ENCODE measurements at regions of chr11 and their contacts with region 1.

Region 1: GRCh38 chr11:77547863-77548551 is 41.7 kb upstream of the AQP11 start:
- DNase-seq: peak; percentile 81
- ATAC-seq: peak; percentile 67
- H3K4me3 ChIP-seq: no peak overlapping the region
- H3K27ac ChIP-seq: no peak overlapping the region
- H3K4me1 ChIP-seq: no peaks in the 10 kb centered on the region
- H3K27me3 ChIP-seq: no peaks in the 10 kb centered on the region
- CTCF ChIP-seq: peak; percentile 90

Region 2: DNA sequence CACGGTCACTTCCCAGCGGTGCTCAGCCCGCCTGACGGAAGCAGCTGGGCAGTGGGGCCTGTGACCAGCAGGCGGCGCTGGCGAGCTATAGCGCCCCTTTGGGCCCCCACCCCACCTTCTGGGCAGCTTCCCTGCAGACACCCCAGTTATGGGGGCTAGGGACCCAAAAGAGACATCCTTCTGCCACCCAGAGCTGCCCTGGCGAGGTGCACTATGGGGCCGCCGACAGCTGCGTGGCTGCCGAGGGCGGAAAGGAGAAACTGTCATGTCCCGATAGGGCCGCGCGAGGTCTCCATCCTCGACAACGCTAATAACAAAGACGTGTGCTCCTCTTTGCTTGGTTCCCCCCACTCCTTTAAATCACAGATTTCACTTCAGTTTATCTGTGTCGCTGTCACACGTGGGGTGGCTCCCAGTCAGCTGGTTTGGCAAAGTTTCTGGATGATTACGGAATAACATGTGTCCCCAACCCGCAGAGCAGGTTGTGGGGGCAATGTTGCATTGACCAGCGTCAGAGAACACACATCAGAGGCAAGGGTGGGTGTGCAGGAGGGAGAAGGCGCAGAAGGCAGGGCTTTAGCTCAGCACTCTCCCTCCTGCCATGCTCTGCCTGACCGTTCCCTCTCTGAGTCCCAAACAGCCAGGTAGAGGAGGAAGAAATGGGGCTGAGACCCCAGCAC is 420.6 kb before region 1 on chr11:
- CTCF ChIA-PET with region 1: no interaction called
- POLR2A ChIA-PET with region 1: no interaction called
- intact Hi-C with region 1: loop called (anchors 1 kb)
- DNase-seq: peak; percentile 50
- ATAC-seq: peak; percentile 77
- H3K4me3 ChIP-seq: peak overlapping the region; percentile 68
- H3K27ac ChIP-seq: no peak overlapping the region
- H3K4me1 ChIP-seq: peaks cover 6% of the 10 kb centered on the region; the same call in 1 of the 2 replicates
- H3K27me3 ChIP-seq: no peaks in the 10 kb centered on the region
- CTCF ChIP-seq: peak; percentile 99

Region 3: GRCh38 chr11:77198440-77198849 is 349.6 kb before region 1 on chr11:
- CTCF ChIA-PET with region 1: interaction called, 17 read pairs
- POLR2A ChIA-PET with region 1: no interaction called
- intact Hi-C with region 1: loop called (anchors 1 kb)
- DNase-seq: peak; percentile 43
- ATAC-seq: peak; percentile 30; the same call in 1 of the 2 replicates
- H3K4me3 ChIP-seq: no peak overlapping the region
- H3K27ac ChIP-seq: no peak overlapping the region
- H3K4me1 ChIP-seq: no peaks in the 10 kb centered on the region
- H3K27me3 ChIP-seq: no peaks in the 10 kb centered on the region
- CTCF ChIP-seq: peak; percentile 64

Region 4: DNA sequence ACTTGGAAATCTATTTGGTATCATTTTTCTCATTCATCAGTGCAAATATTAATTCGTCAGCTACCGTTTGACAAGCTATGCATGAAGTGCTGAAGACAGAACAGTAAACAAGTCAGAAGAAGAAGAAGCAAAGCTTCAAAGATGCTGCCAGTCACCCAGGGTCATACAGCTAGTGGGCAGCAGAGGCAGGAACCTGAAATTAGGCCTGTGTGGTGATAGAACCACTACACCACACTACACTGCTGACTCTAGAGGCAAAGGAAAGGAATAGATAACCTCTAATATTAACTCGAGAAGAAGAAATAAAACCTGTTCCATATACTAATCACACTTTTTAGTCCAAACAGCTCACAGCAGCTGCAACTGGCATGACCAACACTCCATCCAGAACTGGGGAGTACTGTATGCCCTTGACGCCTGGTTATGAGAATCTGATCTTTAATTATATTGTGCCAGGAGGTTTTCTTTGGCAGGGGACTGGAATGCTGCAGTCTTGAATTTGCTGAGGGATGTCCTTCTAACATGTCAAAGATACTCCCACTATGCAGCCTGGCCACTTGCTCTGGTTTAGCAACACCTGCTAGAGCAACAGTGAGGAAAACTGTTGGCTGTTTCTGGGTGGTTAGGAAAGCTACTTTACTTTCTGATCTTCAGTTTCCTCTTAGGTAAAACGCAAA is 147.1 kb before region 1 on chr11:
- CTCF ChIA-PET with region 1: no interaction called
- POLR2A ChIA-PET with region 1: no interaction called
- intact Hi-C with region 1: no loop called
- DNase-seq: no peak
- ATAC-seq: no peak; the same call in 1 of the 2 replicates
- H3K4me3 ChIP-seq: no peak overlapping the region
- H3K27ac ChIP-seq: no peak overlapping the region
- H3K4me1 ChIP-seq: peaks cover 17% of the 10 kb centered on the region
- H3K27me3 ChIP-seq: no peaks in the 10 kb centered on the region
- CTCF ChIP-seq: no peak

Region 5: GRCh38 chr11:77411717-77412441 is 136.1 kb before region 1 on chr11:
- CTCF ChIA-PET with region 1: interaction called, 7 read pairs
- POLR2A ChIA-PET with region 1: no interaction called
- intact Hi-C with region 1: loop called (anchors 5 kb)
- DNase-seq: peak; percentile 87
- ATAC-seq: peak; percentile 68
- H3K4me3 ChIP-seq: peak overlapping the region; percentile 63
- H3K27ac ChIP-seq: no peak overlapping the region
- H3K4me1 ChIP-seq: peaks cover 33% of the 10 kb centered on the region
- H3K27me3 ChIP-seq: no peaks in the 10 kb centered on the region
- CTCF ChIP-seq: no peak

Region 6: GRCh38 chr11:77473801-77474683 is 74.0 kb before region 1 on chr11 and contains the start of gene PAK1:
- CTCF ChIA-PET with region 1: interaction called, 3 read pairs
- POLR2A ChIA-PET with region 1: no interaction called
- intact Hi-C with region 1: loop called (anchors 5 kb)
- DNase-seq: peak; percentile 69
- ATAC-seq: peak; percentile 73
- H3K4me3 ChIP-seq: peak within 1 kb of the TSS; percentile 69
- H3K27ac ChIP-seq: no peak within 1 kb of the TSS
- H3K4me1 ChIP-seq: peaks cover 20% of the 10 kb centered on the region
- H3K27me3 ChIP-seq: peaks cover 16% of the 10 kb centered on the region
- CTCF ChIP-seq: peak; percentile 29; the same call in 1 of the 2 replicates
- total RNA-seq, gene PAK1: 26.1 and 29.8 TPM in 2 replicates

Region 7: GRCh38 chr11:77497368-77497767 is 50.6 kb before region 1 on chr11:
- CTCF ChIA-PET with region 1: interaction called, 3 read pairs
- POLR2A ChIA-PET with region 1: interaction called, 10 read pairs
- intact Hi-C with region 1: loop called (anchors 5 kb)
- DNase-seq: no peak
- ATAC-seq: peak; percentile 11; the same call in 1 of the 2 replicates
- H3K4me3 ChIP-seq: no peak overlapping the region
- H3K27ac ChIP-seq: no peak overlapping the region
- H3K4me1 ChIP-seq: no peaks in the 10 kb centered on the region
- H3K27me3 ChIP-seq: peaks cover 26% of the 10 kb centered on the region
- CTCF ChIP-seq: no peak

Region 8: GRCh38 chr11:77530879-77531278 is 17.1 kb before region 1 on chr11:
- CTCF ChIA-PET with region 1: no interaction called
- POLR2A ChIA-PET with region 1: no interaction called
- intact Hi-C with region 1: no loop called
- DNase-seq: no peak
- ATAC-seq: no peak
- H3K4me3 ChIP-seq: no peak overlapping the region
- H3K27ac ChIP-seq: no peak overlapping the region
- H3K4me1 ChIP-seq: no peaks in the 10 kb centered on the region
- H3K27me3 ChIP-seq: no peaks in the 10 kb centered on the region
- CTCF ChIP-seq: no peak; the same call in 1 of the 2 replicates

Region 9: GRCh38 chr11:77596626-77597025 is 48.6 kb after region 1 on chr11:
- CTCF ChIA-PET with region 1: no interaction called
- POLR2A ChIA-PET with region 1: interaction called, 12 read pairs
- intact Hi-C with region 1: no loop called
- DNase-seq: peak; percentile 19
- ATAC-seq: no peak
- H3K4me3 ChIP-seq: no peak overlapping the region
- H3K27ac ChIP-seq: no peak overlapping the region
- H3K4me1 ChIP-seq: peaks cover 4% of the 10 kb centered on the region
- H3K27me3 ChIP-seq: no peaks in the 10 kb centered on the region
- CTCF ChIP-seq: no peak

Region 10: GRCh38 chr11:78397387-78397786 is 849.4 kb after region 1 on chr11:
- CTCF ChIA-PET with region 1: no interaction called
- POLR2A ChIA-PET with region 1: no interaction called
- intact Hi-C with region 1: no loop called
- DNase-seq: no peak
- ATAC-seq: no peak
- H3K4me3 ChIP-seq: no peak overlapping the region
- H3K27ac ChIP-seq: no peak overlapping the region
- H3K4me1 ChIP-seq: no peaks in the 10 kb centered on the region
- H3K27me3 ChIP-seq: no peaks in the 10 kb centered on the region
- CTCF ChIP-seq: no peak